Dendritic cell treated with granulocyte-macrophage colony-stimulating factor and Interleukin-4, amounts not matched to agents 40 ng/mL and 50 ng/mL, for 4 days (primary cell): ENCODE measurements at regions of chr2 and their contacts with region 1.

Region 1: DNA sequence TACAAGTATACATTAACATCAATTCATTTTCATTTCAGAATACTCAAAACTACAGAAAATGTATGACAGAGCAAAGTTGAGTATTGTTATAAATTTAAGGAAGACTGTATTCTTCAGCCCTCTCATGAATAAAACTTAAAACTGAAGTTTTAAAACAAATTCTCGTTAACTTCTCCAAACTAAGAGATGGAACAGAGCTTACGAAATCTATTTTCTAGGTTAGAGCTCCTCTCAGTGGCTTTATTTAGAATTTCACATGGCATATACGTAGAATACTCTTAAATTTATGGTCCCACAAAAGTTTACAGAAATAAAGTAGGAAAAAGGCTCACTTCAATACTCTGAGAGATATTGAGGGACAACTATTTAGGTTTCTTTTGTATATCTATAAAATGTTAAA is 612.1 kb downstream of the KCNJ3 start:
- H3K4me3 Mint-ChIP-seq: no peak overlapping the region
- H3K27ac Mint-ChIP-seq: no peak overlapping the region
- H3K4me1 Mint-ChIP-seq: no peaks in the 10 kb centered on the region
- H3K27me3 Mint-ChIP-seq: no peaks in the 10 kb centered on the region

Region 2: DNA sequence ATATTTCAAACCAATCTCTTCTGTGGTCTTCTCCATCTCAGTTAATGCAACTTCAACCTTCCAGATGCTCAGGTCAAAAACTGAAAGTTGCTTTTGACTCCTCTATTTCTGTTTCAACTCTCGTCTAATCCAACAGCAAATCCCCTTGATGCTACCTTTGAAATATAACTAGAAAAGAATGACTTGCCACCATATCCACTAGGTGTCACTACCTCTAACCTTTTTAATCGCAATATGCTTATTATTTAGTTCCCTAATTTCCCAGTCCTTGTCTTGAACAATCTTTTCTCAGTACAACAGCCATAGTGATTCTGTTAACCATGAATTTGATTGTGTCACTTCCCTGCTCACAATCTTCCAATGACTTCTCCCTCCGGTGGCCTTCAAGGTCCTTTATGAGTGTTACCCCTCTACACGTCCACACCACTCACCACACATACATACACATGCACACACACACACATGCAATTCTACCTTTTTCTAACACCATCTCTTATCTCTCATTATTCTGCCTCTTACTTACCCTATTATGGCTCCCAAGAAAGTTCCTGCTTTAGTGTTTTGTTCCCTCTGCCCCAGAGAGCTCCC is 857.6 kb before region 1 on chr2:
- intact Hi-C with region 1: loop called (anchors 5 kb)
- H3K4me3 Mint-ChIP-seq: no peak overlapping the region
- H3K27ac Mint-ChIP-seq: no peak overlapping the region
- H3K4me1 Mint-ChIP-seq: peaks cover 5% of the 10 kb centered on the region
- H3K27me3 Mint-ChIP-seq: no peaks in the 10 kb centered on the region

Region 3: DNA sequence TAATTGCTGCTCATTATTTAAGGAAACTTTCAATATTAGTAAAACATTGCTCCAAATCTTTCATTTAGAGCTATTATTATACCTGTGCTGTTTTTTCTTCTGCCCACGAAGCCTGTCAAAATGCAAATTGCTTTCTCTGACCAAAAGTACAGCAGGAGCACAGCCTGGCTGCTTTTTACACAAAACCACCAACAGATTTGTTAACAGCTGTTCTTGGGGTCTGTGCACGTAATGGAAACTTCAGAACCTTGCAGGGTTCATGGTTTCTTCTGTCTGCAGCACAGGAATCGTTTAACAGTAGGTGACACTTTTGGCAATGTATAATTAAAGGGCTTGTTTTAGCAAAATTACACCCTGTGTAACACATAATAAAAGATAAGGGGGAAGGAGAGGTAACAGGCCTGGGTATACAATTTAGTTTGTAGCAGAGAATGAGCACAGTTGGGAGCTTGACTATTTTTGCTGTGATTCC is 164.8 kb before region 1 on chr2:
- intact Hi-C with region 1: no loop called
- H3K4me3 Mint-ChIP-seq: no peak overlapping the region
- H3K27ac Mint-ChIP-seq: no peak overlapping the region
- H3K4me1 Mint-ChIP-seq: no peaks in the 10 kb centered on the region
- H3K27me3 Mint-ChIP-seq: no peaks in the 10 kb centered on the region

Region 4: DNA sequence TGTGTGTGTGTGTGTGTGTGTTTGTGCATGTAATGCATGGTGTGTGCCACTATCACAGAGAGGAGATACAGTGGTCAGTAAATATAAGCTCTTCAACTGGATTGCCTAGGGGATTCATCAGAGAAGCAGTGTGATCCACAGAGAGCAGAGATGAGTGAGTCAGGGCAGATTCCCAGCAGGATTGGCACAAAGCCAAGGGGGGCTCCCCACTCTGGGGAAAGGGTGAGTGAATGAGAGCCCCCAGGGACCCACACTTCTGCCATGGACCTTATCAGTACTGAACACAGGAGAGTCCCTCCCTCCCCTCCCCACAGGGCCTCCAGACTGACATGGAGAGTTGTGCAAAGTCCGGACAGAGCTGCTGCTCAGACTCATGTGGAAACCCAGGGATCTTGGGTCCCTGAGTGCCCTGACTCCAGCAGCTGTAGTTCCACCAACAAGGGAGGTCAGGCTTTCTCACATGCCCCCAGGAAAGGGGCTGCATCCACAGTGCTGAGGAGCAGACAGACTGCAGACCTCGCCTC is 273.1 kb after region 1 on chr2:
- intact Hi-C with region 1: no loop called
- H3K4me3 Mint-ChIP-seq: no peak overlapping the region
- H3K27ac Mint-ChIP-seq: no peak overlapping the region
- H3K4me1 Mint-ChIP-seq: no peaks in the 10 kb centered on the region
- H3K27me3 Mint-ChIP-seq: no peaks in the 10 kb centered on the region